ENCODE measurements at regions of chr15 and their contacts with region 1.

Region 1: DNA sequence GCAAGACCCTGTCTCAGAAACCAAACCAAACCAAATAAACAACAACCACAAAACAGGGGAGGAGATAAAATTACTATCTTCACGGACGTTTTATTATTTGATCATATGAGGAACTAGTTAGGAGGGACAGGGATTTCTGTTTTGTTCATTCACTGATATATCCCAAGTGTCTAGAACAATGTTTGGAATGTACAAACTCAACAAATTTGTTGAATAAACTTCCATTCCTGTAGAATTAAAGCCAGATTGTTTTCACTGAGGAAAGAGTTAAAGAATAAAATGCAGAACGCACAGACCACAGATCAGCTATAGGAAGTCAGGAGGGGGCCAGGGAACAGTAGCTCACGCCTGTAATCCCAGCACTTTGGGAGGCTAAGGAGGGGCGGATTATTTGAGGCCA is 6.5 kb upstream of the STRC start:
- DNase-seq: no peak
- H3K4me3 Mint-ChIP-seq: no peak overlapping the region
- H3K27ac Mint-ChIP-seq: no peak overlapping the region
- H3K4me1 Mint-ChIP-seq: no peaks in the 10 kb centered on the region
- H3K27me3 Mint-ChIP-seq: peaks cover 18% of the 10 kb centered on the region

Region 2: DNA sequence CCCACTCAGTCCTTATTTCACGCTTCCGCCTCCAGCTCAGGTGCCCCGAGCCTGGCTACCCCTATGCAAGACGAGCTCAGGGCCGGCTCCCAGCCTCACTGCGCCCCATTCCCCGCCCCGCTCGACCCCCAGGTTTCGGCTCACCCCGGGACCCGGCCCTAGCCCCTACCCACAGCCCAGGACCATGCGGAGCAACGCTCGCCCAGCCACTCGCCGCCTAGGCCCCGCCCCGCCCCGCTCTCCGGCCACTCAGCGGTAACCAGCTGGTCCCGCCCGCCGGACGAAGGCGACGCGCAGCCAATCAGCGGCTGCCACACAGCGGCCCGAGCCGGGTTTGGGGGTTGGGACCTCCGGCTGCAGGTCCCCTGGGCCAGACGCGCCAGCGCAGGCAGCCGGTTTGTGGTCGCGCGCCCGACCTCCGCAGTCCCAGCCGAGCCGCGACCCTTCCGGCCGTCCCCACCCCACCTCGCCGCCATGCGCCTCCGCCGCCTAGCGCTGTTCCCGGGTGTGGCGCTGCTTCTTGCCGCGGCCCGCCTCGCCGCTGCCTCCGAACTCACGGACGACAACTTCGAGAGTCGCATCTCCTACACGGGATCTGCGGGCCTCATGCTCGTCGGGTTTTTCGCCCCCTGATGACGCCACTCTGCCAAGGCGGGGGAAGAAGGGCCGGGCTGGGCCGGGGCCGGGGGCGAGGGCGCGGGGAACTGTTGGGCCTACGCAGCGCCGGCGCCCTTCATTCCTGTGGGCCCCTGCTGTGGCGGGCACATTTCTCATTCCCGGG is 23.7 kb after region 1 on chr15 and contains the start of gene CATSPER2:
- intact Hi-C with region 1: no loop called
- DNase-seq: peak; percentile 52
- H3K4me3 Mint-ChIP-seq: no peak within 1 kb of the TSS
- H3K27ac Mint-ChIP-seq: no peak within 1 kb of the TSS
- H3K4me1 Mint-ChIP-seq: no peaks in the 10 kb centered on the region
- H3K27me3 Mint-ChIP-seq: no peaks in the 10 kb centered on the region
- total RNA-seq, gene CATSPER2: 8.9 and 10.0 TPM in 2 replicates

Region 3: GRCh38 chr15:43723151-43723550 is 98.0 kb after region 1 on chr15:
- intact Hi-C with region 1: loop called (anchors 5 kb)
- DNase-seq: no peak
- H3K4me3 Mint-ChIP-seq: no peak overlapping the region
- H3K27ac Mint-ChIP-seq: no peak overlapping the region
- H3K4me1 Mint-ChIP-seq: no peaks in the 10 kb centered on the region
- H3K27me3 Mint-ChIP-seq: peaks cover 9% of the 10 kb centered on the region

Region 4: GRCh38 chr15:43735416-43735815 is 110.3 kb after region 1 on chr15:
- intact Hi-C with region 1: no loop called
- DNase-seq: no peak
- H3K4me3 Mint-ChIP-seq: no peak overlapping the region
- H3K27ac Mint-ChIP-seq: no peak overlapping the region
- H3K4me1 Mint-ChIP-seq: peaks cover 8% of the 10 kb centered on the region
- H3K27me3 Mint-ChIP-seq: peaks cover 8% of the 10 kb centered on the region

Measured in activated CD4-positive, alpha-beta T cell treated with anti-CD3 and anti-CD28 coated beads, Interleukin-2, amount 10 ng/mL, durations not matched to agents 24 days and 14 days (primary cell).